AG04450 (cell line): ENCODE measurements at regions of chr17 and their contacts with region 1.

Region 1: DNA sequence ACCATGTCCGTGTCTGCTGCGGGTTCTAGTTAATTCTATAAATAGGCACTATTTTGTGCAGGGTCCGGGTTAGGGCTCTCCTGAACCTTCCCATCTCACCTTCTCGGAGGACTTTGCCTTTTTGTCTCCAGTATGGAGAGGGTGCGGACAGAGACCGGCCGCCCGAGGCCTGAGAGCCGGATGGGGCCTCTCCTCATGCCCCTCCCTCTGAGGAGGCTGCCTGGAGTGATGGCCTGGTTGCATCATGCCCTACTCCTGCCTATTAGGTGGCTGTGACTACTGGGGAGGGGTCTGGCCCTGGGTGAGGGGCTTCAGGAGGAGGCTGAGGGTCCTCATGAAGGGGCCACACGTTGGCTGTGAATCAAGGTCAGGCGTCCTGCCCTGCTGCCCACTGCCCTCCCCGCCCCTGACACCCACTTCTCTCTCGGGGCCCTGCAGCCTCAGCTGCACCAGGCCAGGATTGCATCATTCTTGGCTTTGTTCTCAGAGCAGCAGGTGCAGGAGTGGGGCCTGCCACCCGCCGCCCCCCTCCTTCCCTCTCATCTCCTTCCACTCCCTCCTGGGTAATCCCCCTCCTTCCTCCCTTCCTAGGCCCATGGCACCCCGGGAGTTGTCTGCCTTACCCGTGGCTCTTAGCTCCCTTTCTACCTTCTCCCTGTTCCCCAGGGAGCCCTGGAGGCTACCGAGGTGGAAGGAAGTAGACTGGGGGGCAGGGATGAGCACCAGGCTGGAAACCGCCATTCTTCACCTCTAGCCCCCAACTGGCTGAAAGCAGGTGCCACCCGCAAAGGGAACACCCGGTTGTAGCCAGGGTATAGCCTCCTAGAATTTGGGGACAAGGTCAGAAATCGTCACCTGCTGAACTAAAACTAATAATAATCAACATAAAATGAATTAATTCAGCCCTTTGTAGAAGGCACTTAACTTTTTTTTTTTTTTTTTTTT is 12.7 kb upstream of the ARHGAP23 start:
- DNase-seq: peak; percentile 26
- H3K4me3 ChIP-seq: peak overlapping the region; percentile 38
- H3K27ac ChIP-seq: peak overlapping the region; percentile 57
- H3K27me3 ChIP-seq: peaks cover 28% of the 10 kb centered on the region
- CTCF ChIP-seq: no peak

Region 2: GRCh38 chr17:38322091-38322779 is 93.3 kb before region 1 on chr17:
- CTCF ChIA-PET with region 1: interaction called, 10 read pairs
- POLR2A ChIA-PET with region 1: no interaction called
- DNase-seq: no peak
- H3K4me3 ChIP-seq: no peak overlapping the region
- H3K27ac ChIP-seq: no peak overlapping the region
- H3K27me3 ChIP-seq: peaks cover 3% of the 10 kb centered on the region
- CTCF ChIP-seq: peak; percentile 63

Region 3: GRCh38 chr17:38341035-38341721 is 74.3 kb before region 1 on chr17:
- CTCF ChIA-PET with region 1: interaction called, 14 read pairs
- POLR2A ChIA-PET with region 1: interaction called, 3 read pairs
- DNase-seq: no peak
- H3K4me3 ChIP-seq: no peak overlapping the region
- H3K27ac ChIP-seq: no peak overlapping the region
- H3K27me3 ChIP-seq: peaks cover 44% of the 10 kb centered on the region
- CTCF ChIP-seq: no peak

Region 4: GRCh38 chr17:38358586-38359513 is 56.7 kb before region 1 on chr17:
- CTCF ChIA-PET with region 1: interaction called, 40 read pairs
- POLR2A ChIA-PET with region 1: interaction called, 10 read pairs
- DNase-seq: no peak
- H3K4me3 ChIP-seq: no peak overlapping the region
- H3K27ac ChIP-seq: no peak overlapping the region
- H3K27me3 ChIP-seq: no peaks in the 10 kb centered on the region
- CTCF ChIP-seq: no peak

Region 5: DNA sequence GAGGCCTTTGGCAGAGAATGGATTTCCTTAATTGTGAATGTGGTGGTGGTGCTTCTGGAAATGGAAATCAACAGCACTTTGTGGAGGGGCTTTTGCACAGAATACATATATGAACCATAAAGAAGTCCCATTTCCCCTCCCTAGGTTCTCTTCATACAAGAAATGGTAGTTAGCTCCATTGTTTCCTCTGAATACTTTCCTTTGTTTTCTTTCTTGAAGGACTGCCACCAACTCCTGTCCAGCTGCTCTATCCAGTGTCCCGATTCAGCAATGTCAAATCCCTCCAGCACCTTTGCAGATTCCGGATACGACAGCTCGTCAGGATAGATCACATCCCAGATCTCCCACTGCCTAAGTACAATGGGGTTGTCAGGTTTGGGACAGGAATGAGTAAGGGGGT is 20.4 kb before region 1 on chr17:
- CTCF ChIA-PET with region 1: interaction called, 10 read pairs
- POLR2A ChIA-PET with region 1: interaction called, 3 read pairs
- DNase-seq: no peak
- H3K4me3 ChIP-seq: no peak overlapping the region
- H3K27ac ChIP-seq: no peak overlapping the region
- H3K27me3 ChIP-seq: no peaks in the 10 kb centered on the region
- CTCF ChIP-seq: no peak

Region 6: GRCh38 chr17:38403491-38403890 is 12.0 kb before region 1 on chr17:
- CTCF ChIA-PET with region 1: interaction called, 12 read pairs
- POLR2A ChIA-PET with region 1: no interaction called
- DNase-seq: no peak
- H3K4me3 ChIP-seq: no peak overlapping the region
- H3K27ac ChIP-seq: no peak overlapping the region
- H3K27me3 ChIP-seq: no peaks in the 10 kb centered on the region
- CTCF ChIP-seq: no peak